ENCODE measurements at regions of chr17 and their contacts with region 1.

Region 1: DNA sequence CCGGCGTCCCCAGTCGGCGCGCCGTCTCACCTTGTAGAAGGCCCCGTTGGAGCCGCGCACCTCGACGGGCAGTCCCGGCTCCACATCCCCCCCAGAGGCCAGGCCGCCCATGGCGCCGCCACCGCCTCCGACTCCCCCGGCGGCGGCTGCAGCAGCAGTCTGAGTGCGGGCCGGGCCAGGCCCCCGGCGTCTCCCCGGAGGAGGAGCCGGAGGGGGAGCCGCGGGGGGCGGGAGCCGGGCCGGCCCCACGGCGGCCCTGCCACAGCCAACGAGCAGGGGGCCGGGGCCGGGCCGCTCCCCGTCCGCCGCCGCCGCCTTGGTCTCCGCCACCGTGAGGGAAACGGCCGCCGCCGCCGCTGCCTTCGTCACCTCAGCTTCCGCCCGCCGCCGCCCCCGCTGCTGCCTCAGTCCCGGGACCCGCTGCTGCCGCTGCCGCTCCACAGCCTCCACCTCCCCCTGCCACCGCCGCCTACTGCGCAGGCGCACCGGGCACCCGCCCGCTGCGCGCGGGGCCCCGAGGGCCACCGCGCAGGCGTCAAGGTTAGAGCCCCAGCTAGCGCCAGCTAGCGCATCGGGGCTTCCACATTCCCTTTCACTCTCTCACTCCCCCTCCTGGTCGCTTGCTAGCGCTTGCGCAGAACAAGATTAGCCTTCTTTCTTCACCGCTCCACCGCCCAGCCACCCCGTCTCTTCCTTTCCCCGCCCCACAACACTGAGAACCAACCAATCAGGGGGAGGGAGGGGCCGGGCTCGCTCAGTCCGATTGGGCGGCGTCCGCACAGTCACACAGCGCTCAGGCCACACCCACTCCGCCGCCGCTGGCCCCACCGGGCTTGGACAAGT is at the start of gene FXR2:
- DNase-seq: peak; percentile 97
- ATAC-seq: peak; percentile 93
- H3K4me3 Mint-ChIP-seq: peak within 1 kb of the TSS; percentile 87
- H3K27ac Mint-ChIP-seq: peak within 1 kb of the TSS; percentile 93
- H3K4me1 Mint-ChIP-seq: peaks cover 37% of the 10 kb centered on the region
- H3K27me3 Mint-ChIP-seq: no peaks in the 10 kb centered on the region
- CTCF ChIP-seq: no peak
- total RNA-seq, gene FXR2: 27.5 and 32.4 TPM in 2 replicates

Region 2: DNA sequence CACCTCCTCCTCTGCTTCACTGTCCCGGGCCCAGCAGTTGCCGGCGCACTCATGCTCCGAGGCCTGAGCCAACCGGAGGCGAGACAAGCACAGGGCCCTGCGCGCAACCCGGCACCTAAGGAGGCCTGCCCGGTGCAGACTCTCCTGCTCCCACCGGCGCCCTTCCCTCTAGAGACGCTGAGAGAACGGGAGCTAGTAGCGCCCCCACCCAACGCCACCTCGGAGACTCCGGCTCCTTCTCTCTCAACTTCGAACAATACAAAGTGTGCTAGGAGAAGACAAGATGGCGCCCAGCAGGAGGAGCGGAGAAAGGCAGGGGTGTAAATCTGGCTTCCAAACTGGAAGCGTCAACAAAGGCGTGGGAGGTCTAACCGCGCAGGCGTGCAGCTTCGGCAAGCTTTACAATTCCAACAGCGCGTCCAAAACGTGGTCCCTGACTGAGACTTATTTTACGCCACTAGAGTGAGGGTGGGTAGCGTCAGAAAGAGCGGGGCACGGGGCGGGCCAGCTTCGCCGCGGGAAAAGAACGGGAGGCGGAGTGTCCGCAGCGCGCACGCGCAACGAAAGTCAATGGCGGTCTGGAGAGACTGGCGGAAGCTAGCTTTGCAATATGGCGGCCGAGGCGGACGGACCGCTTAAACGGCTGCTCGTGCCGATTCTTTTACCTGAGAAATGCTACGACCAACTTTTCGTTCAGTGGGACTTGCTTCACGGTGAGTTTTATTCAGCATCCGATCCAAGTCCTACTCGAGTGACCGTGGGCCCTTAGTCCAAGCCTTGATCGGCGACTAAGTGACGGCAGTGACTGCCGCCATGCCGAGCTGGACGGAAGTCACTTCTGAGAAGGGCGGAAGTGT is 31.2 kb before region 1 on chr17 and contains the start of gene MPDU1:
- CTCF ChIA-PET with region 1: interaction called, 10 read pairs
- POLR2A ChIA-PET with region 1: interaction called, 22 read pairs
- intact Hi-C with region 1: loop called (anchors 1 kb)
- DNase-seq: peak; percentile 90
- ATAC-seq: peak; percentile 76
- H3K4me3 Mint-ChIP-seq: peak within 1 kb of the TSS; percentile 100
- H3K27ac Mint-ChIP-seq: peak within 1 kb of the TSS; percentile 100
- H3K4me1 Mint-ChIP-seq: peaks cover 64% of the 10 kb centered on the region
- H3K27me3 Mint-ChIP-seq: no peaks in the 10 kb centered on the region
- CTCF ChIP-seq: no peak
- total RNA-seq, gene MPDU1: 50.7 and 58.9 TPM in 2 replicates

Region 3: DNA sequence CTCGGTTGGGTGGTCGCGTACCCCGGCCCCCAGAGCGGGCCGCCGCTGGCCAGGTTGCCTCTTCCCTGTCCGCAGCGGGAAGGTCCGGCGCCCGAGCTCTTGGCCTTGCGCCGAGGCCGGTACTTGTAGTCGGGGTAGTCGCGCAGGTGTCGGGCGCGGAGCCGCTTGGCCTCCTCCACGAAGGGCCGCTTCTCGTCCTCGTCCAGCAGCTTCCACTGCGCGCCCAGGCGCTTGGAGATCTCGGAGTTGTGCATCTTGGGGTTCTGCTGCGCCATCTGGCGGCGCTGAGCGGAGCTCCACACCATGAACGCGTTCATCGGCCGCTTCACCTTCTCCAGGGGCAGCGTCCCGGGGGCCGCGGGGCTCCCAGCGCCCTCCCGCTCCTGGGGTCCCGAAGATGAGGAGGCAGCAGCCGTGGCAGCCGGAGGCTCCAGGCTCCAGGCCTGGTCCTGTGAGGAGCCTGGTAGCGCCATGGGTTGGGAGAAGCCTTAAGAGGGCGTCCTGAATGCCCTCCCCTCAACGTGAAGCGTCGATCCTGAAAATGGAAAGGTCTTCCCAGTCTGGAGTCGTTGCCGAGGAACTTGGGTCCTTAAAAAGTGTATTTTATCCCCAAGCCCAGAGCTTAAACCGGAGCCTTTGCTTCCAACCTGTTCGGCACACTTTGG is 25.3 kb before region 1 on chr17:
- CTCF ChIA-PET with region 1: interaction called, 10 read pairs
- POLR2A ChIA-PET with region 1: interaction called, 22 read pairs
- intact Hi-C with region 1: no loop called
- DNase-seq: peak; percentile 66
- ATAC-seq: peak; percentile 89
- H3K4me3 Mint-ChIP-seq: no peak overlapping the region
- H3K27ac Mint-ChIP-seq: no peak overlapping the region
- H3K4me1 Mint-ChIP-seq: peaks cover 13% of the 10 kb centered on the region
- H3K27me3 Mint-ChIP-seq: no peaks in the 10 kb centered on the region
- CTCF ChIP-seq: peak; percentile 44

Region 4: DNA sequence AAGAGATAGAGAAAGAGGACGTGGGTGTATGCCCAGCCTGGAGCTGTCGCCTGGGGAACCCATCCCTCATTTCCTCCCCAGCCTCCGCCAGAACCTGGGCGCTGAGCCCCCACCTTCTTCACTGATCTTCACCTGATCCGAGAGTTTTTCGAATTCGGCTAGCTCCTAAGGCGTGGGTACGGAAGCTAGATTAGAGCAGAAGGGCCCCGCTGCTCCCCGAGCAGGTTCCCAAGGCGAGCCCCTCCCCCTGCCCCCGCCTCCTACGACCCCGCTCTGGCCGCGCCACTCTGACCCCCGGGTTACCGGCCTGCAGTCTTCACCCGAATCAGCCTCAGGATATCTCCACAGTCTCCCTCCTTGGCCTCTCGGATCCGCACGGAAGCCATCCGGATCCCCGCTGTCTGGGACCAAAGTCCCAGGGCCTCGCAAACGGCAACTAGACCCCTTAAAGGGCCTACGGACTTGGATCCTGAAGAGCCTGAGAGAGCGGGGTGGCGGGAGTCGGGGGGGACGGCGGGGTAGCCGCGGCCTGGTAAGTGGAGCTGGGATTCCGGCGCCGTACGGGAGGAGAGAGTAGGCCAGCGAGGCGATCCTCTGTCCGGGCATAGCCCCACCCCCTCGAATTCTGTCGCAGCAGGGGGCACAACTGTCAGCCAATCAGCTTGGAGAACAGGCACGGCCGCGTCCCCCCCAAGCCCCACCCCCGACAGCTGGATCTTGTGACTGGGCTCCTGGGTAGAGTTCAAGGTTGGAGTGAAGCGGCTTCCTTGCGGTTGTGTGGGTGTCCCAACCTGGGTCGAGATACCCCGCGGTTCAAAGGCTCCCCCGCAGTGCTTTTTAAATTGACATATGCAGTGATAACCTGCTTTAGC is 12.8 kb after region 1 on chr17 and contains the start of gene SAT2:
- CTCF ChIA-PET with region 1: no interaction called
- POLR2A ChIA-PET with region 1: interaction called, 34 read pairs
- intact Hi-C with region 1: loop called (anchors 1 kb)
- DNase-seq: peak; percentile 68
- ATAC-seq: peak; percentile 99
- H3K4me3 Mint-ChIP-seq: peak within 1 kb of the TSS; percentile 93
- H3K27ac Mint-ChIP-seq: peak within 1 kb of the TSS; percentile 80
- H3K4me1 Mint-ChIP-seq: peaks cover 11% of the 10 kb centered on the region
- H3K27me3 Mint-ChIP-seq: no peaks in the 10 kb centered on the region
- CTCF ChIP-seq: no peak
- total RNA-seq, gene SAT2: 44.5 and 45.0 TPM in 2 replicates

Region 5: GRCh38 chr17:7650509-7651096 is 36.0 kb after region 1 on chr17 and contains the start of gene ATP1B2:
- CTCF ChIA-PET with region 1: no interaction called
- POLR2A ChIA-PET with region 1: interaction called, 3 read pairs
- intact Hi-C with region 1: loop called (anchors 1 kb)
- DNase-seq: peak; percentile 55
- ATAC-seq: peak; percentile 85
- H3K4me3 Mint-ChIP-seq: peak within 1 kb of the TSS; percentile 84
- H3K27ac Mint-ChIP-seq: no peak within 1 kb of the TSS
- H3K4me1 Mint-ChIP-seq: peaks cover 23% of the 10 kb centered on the region
- H3K27me3 Mint-ChIP-seq: peaks cover 42% of the 10 kb centered on the region
- CTCF ChIP-seq: no peak
- total RNA-seq, gene ATP1B2: not detected in 2 replicates

Region 6: GRCh38 chr17:7745748-7746470 is 131.3 kb after region 1 on chr17:
- CTCF ChIA-PET with region 1: no interaction called
- POLR2A ChIA-PET with region 1: no interaction called
- intact Hi-C with region 1: no loop called
- DNase-seq: no peak
- ATAC-seq: no peak
- H3K4me3 Mint-ChIP-seq: no peak overlapping the region
- H3K27ac Mint-ChIP-seq: no peak overlapping the region
- H3K4me1 Mint-ChIP-seq: no peaks in the 10 kb centered on the region
- H3K27me3 Mint-ChIP-seq: peaks cover 12% of the 10 kb centered on the region
- CTCF ChIP-seq: no peak

Region 7: DNA sequence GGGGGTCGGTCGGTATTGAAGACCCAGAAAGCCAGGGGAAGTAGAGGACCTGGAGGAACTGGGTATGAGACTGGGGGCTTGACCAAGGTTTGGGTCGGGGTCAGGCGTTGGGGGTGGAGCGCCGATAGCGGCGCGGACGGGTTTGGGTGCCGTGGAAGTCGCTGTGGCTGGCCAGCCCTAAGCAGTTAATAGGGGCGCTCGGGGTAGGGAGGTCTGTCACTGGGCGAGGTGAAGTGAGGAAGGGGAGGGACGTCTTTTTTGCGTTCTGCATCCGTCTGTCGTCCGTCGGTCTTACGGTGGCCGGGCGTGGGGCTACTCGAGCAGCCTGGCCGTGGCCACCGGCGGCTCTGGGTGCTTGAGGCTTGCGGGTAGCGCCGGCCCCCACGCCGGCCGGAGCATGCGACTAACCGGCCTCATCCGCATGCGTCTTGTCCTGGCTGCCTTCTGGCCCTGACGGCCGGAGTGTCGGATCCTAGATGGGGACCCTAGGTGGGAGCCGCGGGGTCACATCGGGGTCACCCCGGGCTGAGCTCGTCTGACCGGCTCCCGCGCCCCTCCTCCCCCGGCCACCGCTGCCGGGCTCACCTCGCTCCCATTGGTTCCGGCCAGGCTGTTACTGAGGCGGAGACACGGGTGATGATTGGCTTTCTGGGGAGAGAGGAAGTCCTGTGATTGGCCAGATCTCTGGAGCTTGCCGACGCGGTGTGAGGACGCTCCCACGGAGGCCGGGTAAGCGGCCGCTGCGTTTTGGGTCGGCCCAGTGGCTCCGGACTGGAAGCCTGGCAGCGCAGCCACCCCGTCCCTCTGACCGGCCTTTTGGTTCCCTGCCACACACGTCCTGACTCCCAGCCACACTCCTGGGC is 229.9 kb after region 1 on chr17:
- CTCF ChIA-PET with region 1: no interaction called
- POLR2A ChIA-PET with region 1: no interaction called
- intact Hi-C with region 1: loop called (anchors 1 kb)
- DNase-seq: peak; percentile 83
- ATAC-seq: peak; percentile 46
- H3K4me3 Mint-ChIP-seq: peak overlapping the region; percentile 98
- H3K27ac Mint-ChIP-seq: peak overlapping the region; percentile 100
- H3K4me1 Mint-ChIP-seq: peaks cover 50% of the 10 kb centered on the region
- H3K27me3 Mint-ChIP-seq: no peaks in the 10 kb centered on the region
- CTCF ChIP-seq: no peak